BJ (cell line): ENCODE measurements at regions of chr1 and their contacts with region 1.

Region 1: GRCh38 chr1:10559386-10559785 is 84.6 kb downstream of the PEX14 start:
- DNase-seq: no peak
- H3K4me3 ChIP-seq: no peak overlapping the region
- H3K27me3 ChIP-seq: no peaks in the 10 kb centered on the region
- CTCF ChIP-seq: no peak

Region 2: DNA sequence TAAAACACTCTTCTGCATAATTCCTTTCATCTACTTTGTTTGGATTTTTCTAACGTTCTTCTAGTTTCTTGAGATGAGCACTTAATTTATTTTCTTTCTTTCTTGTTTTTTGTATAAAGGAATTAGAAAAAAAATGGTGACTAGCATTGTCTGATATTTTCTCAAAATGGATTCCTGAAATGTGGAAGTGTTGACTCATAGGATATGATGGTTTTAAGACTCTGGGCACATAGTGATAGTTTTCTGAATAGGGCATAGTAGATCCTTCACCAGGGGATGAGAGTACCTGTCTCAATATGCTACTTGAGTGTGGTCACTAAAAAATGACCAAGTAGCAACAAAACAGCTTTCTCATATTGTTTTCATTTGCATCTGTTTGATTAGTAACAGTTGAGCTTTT is 16.2 kb after region 1 on chr1:
- CTCF ChIA-PET with region 1: interaction called, 3 read pairs
- POLR2A ChIA-PET with region 1: interaction called, 20 read pairs
- DNase-seq: peak; percentile 51
- H3K4me3 ChIP-seq: no peak overlapping the region
- H3K27me3 ChIP-seq: no peaks in the 10 kb centered on the region
- CTCF ChIP-seq: no peak

Region 3: GRCh38 chr1:10646347-10646861 is 87.0 kb after region 1 on chr1:
- CTCF ChIA-PET with region 1: no interaction called
- POLR2A ChIA-PET with region 1: no interaction called
- DNase-seq: no peak
- H3K4me3 ChIP-seq: no peak overlapping the region
- H3K27me3 ChIP-seq: no peaks in the 10 kb centered on the region
- CTCF ChIP-seq: no peak

Region 4: GRCh38 chr1:10877894-10878293 is 318.5 kb after region 1 on chr1:
- CTCF ChIA-PET with region 1: no interaction called
- POLR2A ChIA-PET with region 1: no interaction called
- DNase-seq: no peak
- H3K4me3 ChIP-seq: no peak overlapping the region
- H3K27me3 ChIP-seq: peaks cover 7% of the 10 kb centered on the region
- CTCF ChIP-seq: no peak